Adrenal gland (tissue), 19 donors: ENCODE measurements at regions of chr5 and their contacts with region 1.

Region 1: DNA sequence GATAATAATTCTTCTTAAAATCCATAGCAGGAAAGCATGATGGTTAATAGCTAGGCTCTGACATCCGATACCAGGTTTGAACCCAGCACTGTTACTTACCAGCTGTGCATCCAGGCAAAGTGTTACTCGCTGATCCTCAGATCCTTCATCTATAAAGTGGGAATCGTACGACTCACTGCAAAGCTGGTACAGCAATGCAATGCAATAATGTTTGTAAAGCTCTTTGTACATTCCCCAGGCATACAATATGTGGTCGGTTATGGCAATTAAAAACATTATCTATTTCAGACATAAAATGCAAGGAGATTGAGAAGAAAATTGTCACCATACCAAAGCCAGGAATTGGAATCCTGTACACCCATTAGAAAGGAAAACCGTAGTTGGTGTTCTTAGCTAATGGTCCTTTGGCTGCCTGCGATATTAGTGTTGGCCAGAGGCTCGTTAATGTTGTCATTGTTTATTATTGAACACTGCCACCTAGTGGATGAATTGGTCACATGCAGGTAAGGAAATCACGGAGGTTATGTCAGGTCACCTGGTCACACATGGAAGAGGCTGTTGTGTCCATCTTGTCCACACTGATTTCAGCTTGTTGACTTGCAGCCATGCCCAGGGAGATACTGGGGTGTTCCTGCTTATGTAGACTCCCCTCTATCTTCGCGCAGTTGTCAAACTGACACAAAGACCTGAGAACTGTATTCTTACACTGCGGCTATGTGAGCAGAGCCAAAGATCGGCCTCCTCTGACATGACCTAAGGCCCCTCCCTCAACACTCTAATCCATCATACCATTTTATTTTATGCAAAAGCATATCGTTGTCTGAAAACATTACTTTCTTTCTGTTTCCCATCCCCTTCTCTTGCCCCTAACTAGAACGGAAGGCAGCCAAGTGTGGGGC is 87.5 kb upstream of the PPP2R2B start:
- DNase-seq: peak; percentile 59 to 90 (median 75)
- H3K4me3 ChIP-seq: no peak overlapping the region
- H3K27ac ChIP-seq: no peak overlapping the region
- H3K4me1 ChIP-seq: no peaks in the 10 kb centered on the region
- H3K27me3 ChIP-seq: no peaks in the 10 kb centered on the region
- CTCF ChIP-seq: peak; percentile 90 to 98 (median 95)
- POLR2A ChIP-seq: no peak

Region 2: DNA sequence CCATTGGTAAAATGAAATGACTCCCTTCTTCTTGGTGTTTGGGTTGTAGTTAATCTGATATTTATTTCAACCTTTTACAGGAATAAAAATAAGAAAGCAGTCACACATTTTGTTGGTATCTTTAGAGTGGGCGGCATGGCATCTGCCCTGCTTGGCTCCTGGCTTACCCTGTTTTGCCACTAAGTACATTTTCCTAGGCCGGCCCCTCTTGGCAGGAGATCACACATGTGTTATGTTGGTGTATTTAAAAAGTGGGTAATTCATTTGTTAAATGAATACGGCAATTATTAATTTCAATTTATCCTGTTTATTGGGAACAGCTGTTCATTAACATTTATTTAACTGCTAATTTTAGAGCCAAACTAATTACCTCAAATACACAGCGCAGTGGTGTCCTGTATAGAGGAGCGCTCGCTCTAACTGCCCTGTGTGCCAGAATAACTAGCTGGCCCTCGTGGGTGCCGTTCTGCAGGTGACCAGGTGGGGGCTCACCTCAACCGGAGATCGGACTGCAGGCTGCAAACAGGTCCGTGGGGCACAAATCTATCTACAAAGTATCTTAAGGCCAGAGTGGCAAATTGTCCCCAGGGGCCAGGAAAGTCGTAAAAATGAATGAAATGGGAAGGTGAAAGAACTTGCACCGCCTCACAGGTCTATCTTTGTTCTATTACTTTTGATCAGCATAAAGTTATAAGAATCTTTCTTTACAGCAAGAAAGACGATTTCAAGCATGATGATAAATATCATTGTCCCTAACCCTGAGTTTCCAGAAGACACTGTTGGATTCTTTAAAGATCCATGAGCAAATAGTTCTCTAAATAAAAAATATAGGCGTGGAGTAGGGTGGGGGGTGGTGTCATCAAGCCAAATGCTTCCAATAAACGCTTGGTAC is 423.8 kb before region 1 on chr5:
- intact Hi-C with region 1: loop called (anchors 5 to 10 kb)
- DNase-seq: peak; percentile 64 to 91 (median 80)
- H3K4me3 ChIP-seq: no peak overlapping the region
- H3K27ac ChIP-seq: no peak overlapping the region
- H3K4me1 ChIP-seq: no peaks in the 10 kb centered on the region
- H3K27me3 ChIP-seq: no peaks in the 10 kb centered on the region
- CTCF ChIP-seq: peak; percentile 66 to 84 (median 74)
- POLR2A ChIP-seq: no peak

Region 3: GRCh38 chr5:146653560-146653959 is 312.4 kb before region 1 on chr5:
- intact Hi-C with region 1: loop called in 1 of 2 experiments (anchors 10 kb)
- DNase-seq: peak in 1 of 7 donors; percentile 62
- H3K4me3 ChIP-seq: no peak overlapping the region
- H3K27ac ChIP-seq: no peak overlapping the region
- H3K4me1 ChIP-seq: no peaks in the 10 kb centered on the region
- H3K27me3 ChIP-seq: no peaks in the 10 kb centered on the region
- CTCF ChIP-seq: no peak
- POLR2A ChIP-seq: no peak

Region 4: GRCh38 chr5:146662229-146662628 is 303.8 kb before region 1 on chr5:
- intact Hi-C with region 1: loop called (anchors 5 to 10 kb)
- DNase-seq: peak in 1 of 7 donors; percentile 23
- H3K4me3 ChIP-seq: no peak overlapping the region
- H3K27ac ChIP-seq: no peak overlapping the region
- H3K4me1 ChIP-seq: no peaks in the 10 kb centered on the region
- H3K27me3 ChIP-seq: no peaks in the 10 kb centered on the region
- CTCF ChIP-seq: peak; percentile 50 to 72 (median 65)
- POLR2A ChIP-seq: no peak

Region 5: DNA sequence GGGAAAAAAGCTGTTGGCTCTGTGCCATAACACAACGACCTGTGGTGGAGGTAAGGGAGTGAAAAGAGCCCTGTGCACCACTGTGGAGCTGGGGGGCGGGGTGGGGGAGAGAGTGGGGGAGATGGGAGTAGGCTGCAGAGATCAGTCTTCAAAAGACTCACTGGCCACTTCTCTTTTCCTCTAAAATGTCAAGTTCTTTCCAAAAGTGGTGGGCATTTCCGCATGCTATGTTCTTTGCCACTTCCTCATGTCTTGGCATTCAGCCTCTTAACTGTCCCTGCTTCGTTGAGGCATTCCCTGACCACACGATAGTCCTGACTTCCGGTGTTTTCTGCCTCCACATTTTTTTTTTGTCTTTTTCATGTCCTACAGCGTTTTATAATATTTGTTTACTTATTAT is 85.0 kb before region 1 on chr5:
- intact Hi-C with region 1: no loop called
- DNase-seq: no peak
- H3K4me3 ChIP-seq: no peak overlapping the region
- H3K27ac ChIP-seq: no peak overlapping the region
- H3K4me1 ChIP-seq: peaks cover 11 to 28% of the 10 kb centered on the region in 2 donors
- H3K27me3 ChIP-seq: peaks cover 24% of the 10 kb centered on the region
- CTCF ChIP-seq: no peak
- POLR2A ChIP-seq: no peak

Region 6: GRCh38 chr5:147188200-147189108 is 222.4 kb after region 1 on chr5:
- intact Hi-C with region 1: loop called in 1 of 2 experiments (anchors 10 kb)
- DNase-seq: peak; percentile 62 to 83 (median 75)
- H3K4me3 ChIP-seq: peak overlapping the region in 1 of 4 donors; percentile 41
- H3K27ac ChIP-seq: no peak overlapping the region
- H3K4me1 ChIP-seq: peaks cover 0 to 16% of the 10 kb centered on the region in 2 donors
- H3K27me3 ChIP-seq: no peaks in the 10 kb centered on the region
- CTCF ChIP-seq: peak; percentile 87 to 94 (median 93)
- POLR2A ChIP-seq: no peak

Region 7: GRCh38 chr5:147699496-147700088 is 733.6 kb after region 1 on chr5:
- intact Hi-C with region 1: no loop called
- DNase-seq: no peak
- H3K4me3 ChIP-seq: no peak overlapping the region
- H3K27ac ChIP-seq: no peak overlapping the region
- H3K4me1 ChIP-seq: no peaks in the 10 kb centered on the region
- H3K27me3 ChIP-seq: no peaks in the 10 kb centered on the region
- CTCF ChIP-seq: no peak
- POLR2A ChIP-seq: no peak